Posterior cingulate gyrus (tissue), 11 donors: ENCODE measurements at regions of chr18 and their contacts with region 1.

Region 1: GRCh38 chr18:48777026-48777743 is 173.6 kb downstream of the SMAD7 start:
- DNase-seq: peak in 8 of 10 donors; percentile 55 to 95 (median 71)

Region 2: DNA sequence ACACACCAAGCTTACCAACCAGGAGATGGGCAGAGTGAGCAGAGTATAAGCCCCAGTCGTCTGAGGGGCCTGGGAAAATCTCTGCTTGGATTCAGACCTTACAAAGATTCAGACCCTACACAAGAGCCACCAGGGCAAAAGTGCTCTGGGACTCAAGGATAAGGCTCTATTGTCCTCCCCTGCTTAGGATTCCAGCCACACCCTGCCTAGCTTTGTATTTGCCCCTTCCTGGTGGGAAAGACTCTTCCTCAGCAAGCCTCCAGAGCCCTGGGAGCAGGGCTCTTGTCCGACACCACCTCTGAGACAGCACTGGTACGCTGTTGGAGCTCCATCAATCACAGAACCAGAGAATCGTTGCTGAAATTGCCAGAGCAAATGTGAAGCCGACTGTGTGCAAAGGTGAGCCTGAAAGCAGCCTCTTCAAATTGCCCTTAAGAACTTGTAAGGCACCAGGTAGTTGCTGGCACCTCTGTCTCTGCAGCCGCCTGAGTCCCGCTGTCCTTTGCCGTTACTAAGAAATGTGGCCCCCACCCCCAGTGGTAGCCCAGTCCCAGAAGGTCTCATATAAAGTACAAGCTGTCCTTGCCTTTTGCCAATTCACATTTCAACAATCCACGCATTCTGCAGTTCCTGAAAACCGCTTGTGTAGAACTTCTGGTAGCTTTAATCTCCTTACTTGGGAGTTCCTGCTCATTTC is 89.7 kb before region 1 on chr18:
- intact Hi-C with region 1: no loop called
- DNase-seq: no peak

Region 3: GRCh38 chr18:48842259-48843061 is 65.3 kb after region 1 on chr18:
- intact Hi-C with region 1: loop called (anchors 5 kb)
- DNase-seq: peak in 3 of 10 donors; percentile 23 to 73 (median 49)

Region 4: DNA sequence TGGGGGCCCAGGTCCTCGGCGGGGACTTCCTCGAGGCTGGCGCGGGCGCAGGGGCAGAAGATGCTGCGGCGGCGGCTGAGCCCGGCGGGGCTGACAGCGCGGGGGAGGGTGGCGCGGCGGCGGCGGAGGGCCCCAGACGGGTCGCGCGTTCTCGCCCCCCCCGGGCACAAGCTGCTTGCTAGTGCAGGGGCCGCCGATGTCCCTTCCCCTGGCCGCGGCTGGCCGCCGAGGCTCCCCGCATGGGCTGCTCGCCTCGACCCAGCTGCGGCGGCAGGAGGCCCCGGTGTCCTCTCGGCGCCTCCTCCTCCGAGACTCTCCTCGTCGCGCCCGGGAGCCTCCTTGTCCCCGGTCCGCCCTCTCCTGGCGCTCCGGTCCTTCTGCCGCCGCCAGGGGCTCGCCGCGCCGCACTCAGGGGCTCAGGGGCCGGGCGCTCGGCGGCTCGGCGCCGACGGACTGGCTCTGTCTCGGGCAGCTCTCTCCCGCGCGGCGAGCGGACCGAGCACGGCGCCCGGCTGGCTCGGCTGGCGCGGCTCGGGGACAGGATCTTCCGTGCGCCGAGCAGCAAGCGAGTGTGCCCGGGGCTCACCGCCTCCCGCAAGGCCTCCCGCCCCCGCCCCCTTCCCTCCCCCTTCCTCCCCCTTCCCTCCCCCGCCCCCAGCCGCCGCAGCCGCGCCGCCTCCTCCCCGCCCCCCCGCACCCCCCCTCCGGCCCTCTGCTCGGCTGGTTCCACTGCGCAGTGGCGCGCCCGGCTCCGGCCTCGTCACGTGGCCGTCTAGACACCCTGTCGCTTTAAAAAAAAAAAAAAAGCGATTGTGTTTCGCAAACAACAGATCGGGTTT is 174.5 kb after region 1 on chr18:
- intact Hi-C with region 1: loop called (anchors 2 kb)
- DNase-seq: peak; percentile 63 to 97 (median 81)

Region 5: GRCh38 chr18:49183921-49184320 is 406.7 kb after region 1 on chr18:
- intact Hi-C with region 1: loop called (anchors 5 kb)
- DNase-seq: peak in 1 of 10 donors; percentile 55

Region 6: GRCh38 chr18:49238433-49239042 is 461.4 kb after region 1 on chr18:
- intact Hi-C with region 1: loop called (anchors 10 kb)
- DNase-seq: no peak